ENCODE measurements at regions of chr20 and their contacts with region 1.

Region 1: GRCh38 chr20:24781422-24781980 is 167.6 kb upstream of the CST7 start:
- DNase-seq: no peak
- ATAC-seq: peak; percentile 88
- H3K4me3 ChIP-seq: no peak overlapping the region
- H3K27ac ChIP-seq: no peak overlapping the region
- H3K4me1 ChIP-seq: no peaks in the 10 kb centered on the region
- H3K27me3 ChIP-seq: no peaks in the 10 kb centered on the region; the same call in 1 of the 2 replicates
- CTCF ChIP-seq: peak; percentile 83

Region 2: GRCh38 chr20:24838546-24839535 is 57.3 kb after region 1 on chr20:
- CTCF ChIA-PET with region 1: no interaction called
- POLR2A ChIA-PET with region 1: no interaction called
- in situ Hi-C with region 1: no loop called
- intact Hi-C with region 1: no loop called
- DNase-seq: no peak
- ATAC-seq: no peak
- H3K4me3 ChIP-seq: no peak overlapping the region
- H3K27ac ChIP-seq: no peak overlapping the region
- H3K4me1 ChIP-seq: no peaks in the 10 kb centered on the region
- H3K27me3 ChIP-seq: no peaks in the 10 kb centered on the region
- CTCF ChIP-seq: no peak

Region 3: DNA sequence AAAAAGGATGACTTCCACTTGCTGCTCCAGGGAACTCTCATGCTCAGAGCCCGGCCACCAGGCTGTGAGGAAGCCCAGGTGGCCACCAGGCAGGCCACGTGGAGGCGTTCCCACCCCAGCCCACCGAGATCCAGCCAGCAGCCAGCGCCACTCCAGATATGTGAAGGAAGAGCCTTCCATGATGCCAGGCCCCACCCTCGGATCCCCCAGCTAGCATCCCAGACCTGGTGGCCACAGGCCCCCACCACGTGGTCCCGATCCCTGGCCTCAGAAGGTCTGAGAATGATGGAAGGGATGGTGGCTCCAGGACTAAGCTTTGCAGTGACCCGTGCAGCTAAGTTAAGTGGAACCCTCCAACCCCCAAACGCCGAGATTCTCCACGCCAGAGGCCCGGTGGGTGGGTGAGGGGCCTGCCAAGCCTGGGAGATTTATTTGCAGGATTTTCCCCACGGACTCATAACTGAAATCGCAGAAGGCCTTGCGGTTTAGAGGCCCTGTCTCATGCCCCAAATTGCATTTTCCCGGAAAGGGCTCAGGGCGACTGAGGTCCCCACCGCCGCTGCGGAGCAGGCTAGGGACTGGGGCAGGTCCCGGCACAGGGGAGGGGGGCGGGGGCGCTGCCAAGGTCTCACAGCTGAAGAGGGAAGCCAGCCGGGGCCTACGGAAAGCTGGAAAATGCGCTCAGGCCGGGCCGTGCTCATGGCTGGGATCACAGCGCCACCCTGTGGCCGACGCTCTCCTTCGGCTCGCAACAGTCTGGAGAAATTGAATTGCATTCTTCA is 136.5 kb after region 1 on chr20:
- CTCF ChIA-PET with region 1: interaction called, 9 read pairs
- POLR2A ChIA-PET with region 1: no interaction called
- in situ Hi-C with region 1: no loop called
- intact Hi-C with region 1: loop called (anchors 5 kb)
- DNase-seq: peak; percentile 17
- ATAC-seq: peak; percentile 94
- H3K4me3 ChIP-seq: no peak overlapping the region
- H3K27ac ChIP-seq: no peak overlapping the region
- H3K4me1 ChIP-seq: no peaks in the 10 kb centered on the region
- H3K27me3 ChIP-seq: no peaks in the 10 kb centered on the region
- CTCF ChIP-seq: peak; percentile 93

Measured in Panc1 (cell line).